Naive thymus-derived CD4-positive, alpha-beta T cell (primary cell): ENCODE measurements at regions of chr2 and their contacts with region 1.

Region 1: GRCh38 chr2:101823347-101823791 is 125.9 kb downstream of the MAP4K4 start:
- DNase-seq: peak; percentile 29 to 72 (median 64)
- ATAC-seq: peak; percentile 93
- H3K4me3 ChIP-seq: no peak overlapping the region
- H3K4me3 Mint-ChIP-seq: peak overlapping the region; percentile 27 to 74 (median 56)
- H3K27ac ChIP-seq: peak overlapping the region; percentile 43
- H3K27ac Mint-ChIP-seq: peak overlapping the region; percentile 70 to 95 (median 82)
- H3K4me1 ChIP-seq: peaks cover 15 to 45% of the 10 kb centered on the region in 2 donors
- H3K4me1 Mint-ChIP-seq: peaks cover 47 to 97% (median 82%) of the 10 kb centered on the region in 7 donors
- H3K27me3 ChIP-seq: no peaks in the 10 kb centered on the region
- H3K27me3 Mint-ChIP-seq: no peaks in the 10 kb centered on the region

Region 2: DNA sequence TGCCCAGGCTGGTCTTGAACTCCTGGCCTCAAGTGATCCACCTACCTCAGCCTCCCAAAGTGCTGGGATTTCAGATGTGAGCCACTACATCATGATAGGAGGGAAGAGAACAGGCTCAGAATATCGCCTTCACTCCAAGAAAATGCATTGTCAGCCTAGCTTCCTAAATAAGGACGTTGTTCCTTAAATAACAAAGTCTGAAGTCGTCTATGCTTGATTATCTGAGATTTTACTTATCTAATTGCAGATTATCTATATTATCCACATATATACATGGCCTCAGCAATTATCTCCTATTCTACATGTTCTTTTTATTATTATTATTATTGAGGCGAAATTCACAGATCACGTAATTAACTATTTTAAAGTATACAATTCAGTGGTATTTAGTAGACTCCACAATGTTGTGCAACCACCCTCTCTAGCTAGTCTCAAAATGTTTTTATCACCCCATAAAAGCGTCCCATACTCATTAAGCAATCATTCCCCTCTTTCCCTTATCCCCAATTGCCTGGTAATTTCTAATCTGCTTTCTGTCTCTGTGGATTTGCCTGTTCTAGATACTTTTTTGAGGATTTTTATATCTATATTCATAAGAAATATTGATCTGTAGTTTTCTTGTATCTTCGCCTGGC is 253.4 kb before region 1 on chr2:
- CTCF ChIA-PET with region 1: no interaction called
- POLR2A ChIA-PET with region 1: no interaction called
- intact Hi-C with region 1: loop called in 1 of 2 experiments (anchors 5 kb)
- DNase-seq: no peak
- ATAC-seq: no peak
- H3K4me3 ChIP-seq: peak overlapping the region; percentile 12
- H3K4me3 Mint-ChIP-seq: peak overlapping the region; percentile 61 to 90 (median 80)
- H3K27ac ChIP-seq: no peak overlapping the region
- H3K27ac Mint-ChIP-seq: peak overlapping the region; percentile 82 to 96 (median 91)
- H3K4me1 ChIP-seq: peaks cover 10 to 33% of the 10 kb centered on the region in 2 donors
- H3K4me1 Mint-ChIP-seq: peaks cover 16 to 75% (median 62%) of the 10 kb centered on the region in 7 donors
- H3K27me3 ChIP-seq: no peaks in the 10 kb centered on the region
- H3K27me3 Mint-ChIP-seq: peaks cover 0 to 15% (median 0%) of the 10 kb centered on the region in 5 donors

Region 3: GRCh38 chr2:101704046-101704466 is 119.3 kb before region 1 on chr2:
- CTCF ChIA-PET with region 1: interaction called, 10 read pairs
- POLR2A ChIA-PET with region 1: interaction called, 25 read pairs
- intact Hi-C with region 1: loop called (anchors 1 to 2 kb)
- DNase-seq: peak in 7 of 9 donors; percentile 37 to 64 (median 57)
- ATAC-seq: peak; percentile 48
- H3K4me3 ChIP-seq: peak overlapping the region; percentile 50
- H3K4me3 Mint-ChIP-seq: peak overlapping the region in 7 of 10 donors; percentile 71 to 88 (median 86)
- H3K27ac ChIP-seq: peak overlapping the region; percentile 52
- H3K27ac Mint-ChIP-seq: peak overlapping the region in 4 of 9 donors; percentile 89 to 96 (median 93)
- H3K4me1 ChIP-seq: peaks cover 68 to 77% of the 10 kb centered on the region in 2 donors
- H3K4me1 Mint-ChIP-seq: peaks cover 0 to 83% (median 48%) of the 10 kb centered on the region in 7 donors
- H3K27me3 ChIP-seq: no peaks in the 10 kb centered on the region
- H3K27me3 Mint-ChIP-seq: no peaks in the 10 kb centered on the region

Region 4: GRCh38 chr2:101770726-101771125 is 52.6 kb before region 1 on chr2:
- CTCF ChIA-PET with region 1: interaction called, 3 read pairs
- POLR2A ChIA-PET with region 1: no interaction called
- intact Hi-C with region 1: loop called in 1 of 2 experiments (anchors 1 kb)
- DNase-seq: no peak
- ATAC-seq: peak; percentile 48
- H3K4me3 ChIP-seq: no peak overlapping the region
- H3K4me3 Mint-ChIP-seq: peak overlapping the region in 8 of 10 donors; percentile 48 to 79 (median 73)
- H3K27ac ChIP-seq: no peak overlapping the region
- H3K27ac Mint-ChIP-seq: peak overlapping the region in 7 of 9 donors; percentile 14 to 90 (median 59)
- H3K4me1 ChIP-seq: peaks cover 20 to 79% of the 10 kb centered on the region in 2 donors
- H3K4me1 Mint-ChIP-seq: peaks cover 73 to 98% (median 95%) of the 10 kb centered on the region in 7 donors
- H3K27me3 ChIP-seq: no peaks in the 10 kb centered on the region
- H3K27me3 Mint-ChIP-seq: no peaks in the 10 kb centered on the region

Region 5: GRCh38 chr2:101805152-101806088 is 17.9 kb before region 1 on chr2:
- CTCF ChIA-PET with region 1: no interaction called
- POLR2A ChIA-PET with region 1: no interaction called
- intact Hi-C with region 1: loop called in 1 of 2 experiments (anchors 1 kb)
- DNase-seq: no peak
- ATAC-seq: no peak
- H3K4me3 ChIP-seq: no peak overlapping the region
- H3K4me3 Mint-ChIP-seq: peak overlapping the region in 6 of 10 donors; percentile 4 to 33 (median 24)
- H3K27ac ChIP-seq: no peak overlapping the region
- H3K27ac Mint-ChIP-seq: peak overlapping the region; percentile 4 to 88 (median 36)
- H3K4me1 ChIP-seq: peaks cover 5 to 37% of the 10 kb centered on the region in 2 donors
- H3K4me1 Mint-ChIP-seq: peaks cover 39 to 92% (median 86%) of the 10 kb centered on the region in 7 donors
- H3K27me3 ChIP-seq: no peaks in the 10 kb centered on the region
- H3K27me3 Mint-ChIP-seq: no peaks in the 10 kb centered on the region